ENCODE measurements at regions of chr12 and their contacts with region 1.

Region 1: DNA sequence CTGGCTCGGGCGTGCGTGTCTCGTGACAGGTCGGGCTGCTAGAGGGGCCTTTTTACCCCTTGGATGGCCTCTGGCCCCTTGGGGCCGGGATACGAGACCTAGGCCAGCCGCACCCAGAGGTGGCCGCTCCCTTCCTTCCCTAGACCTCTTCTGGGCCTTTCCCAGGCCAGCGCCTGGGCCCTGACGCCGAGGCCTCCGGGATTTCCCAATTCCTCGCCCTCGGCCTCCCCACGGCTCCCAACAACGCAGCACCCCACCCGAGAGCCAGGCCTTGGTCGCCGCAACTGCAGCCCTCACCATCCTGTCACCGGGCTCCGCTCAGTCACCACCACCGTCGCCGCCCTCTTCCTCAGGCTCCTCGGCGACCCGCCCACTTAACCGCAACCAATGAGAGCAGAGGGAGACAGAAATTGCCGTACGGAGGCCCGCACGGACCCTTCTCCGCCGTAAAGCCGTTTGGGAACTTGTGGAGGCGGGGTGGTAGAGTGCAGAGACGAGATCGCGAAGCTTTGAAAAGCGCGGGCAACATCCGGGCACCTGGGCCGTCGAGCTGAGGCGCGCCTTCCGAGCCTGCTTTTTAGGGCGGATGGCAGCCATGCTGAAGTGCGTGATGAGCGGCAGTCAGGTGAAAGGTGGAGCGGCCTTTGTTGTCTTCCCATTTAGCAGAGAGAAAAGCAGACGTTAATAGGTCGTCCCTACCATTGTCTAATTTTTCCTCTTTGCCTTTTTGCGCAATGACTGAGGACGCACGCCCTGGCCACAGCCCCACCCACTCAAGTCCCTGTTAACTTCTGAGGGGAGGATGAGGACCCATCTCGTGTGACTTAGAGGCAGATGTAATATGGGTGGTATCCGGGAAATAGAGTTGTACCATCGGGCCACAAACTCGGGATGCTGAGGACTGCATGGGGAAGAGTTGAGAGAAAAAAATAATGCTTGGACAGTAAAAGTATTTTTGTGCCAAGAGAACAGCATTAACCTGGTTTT is at the starts of genes RAD9B and VPS29:
- DNase-seq: peak; percentile 98
- ATAC-seq: peak; percentile 98
- H3K4me3 Mint-ChIP-seq: peak within 1 kb of the TSS; percentile 98
- H3K27ac Mint-ChIP-seq: peak within 1 kb of the TSS; percentile 90
- H3K4me1 Mint-ChIP-seq: peaks cover 8% of the 10 kb centered on the region
- H3K27me3 Mint-ChIP-seq: peaks cover 30% of the 10 kb centered on the region
- CTCF ChIP-seq: no peak
- total RNA-seq, gene RAD9B: 0.09 to 0.32 TPM in 2 of 3 replicates, not detected in the other
- total RNA-seq, gene VPS29: 51.2 to 66.3 TPM (median 54.4 TPM) in 3 replicates

Region 2: DNA sequence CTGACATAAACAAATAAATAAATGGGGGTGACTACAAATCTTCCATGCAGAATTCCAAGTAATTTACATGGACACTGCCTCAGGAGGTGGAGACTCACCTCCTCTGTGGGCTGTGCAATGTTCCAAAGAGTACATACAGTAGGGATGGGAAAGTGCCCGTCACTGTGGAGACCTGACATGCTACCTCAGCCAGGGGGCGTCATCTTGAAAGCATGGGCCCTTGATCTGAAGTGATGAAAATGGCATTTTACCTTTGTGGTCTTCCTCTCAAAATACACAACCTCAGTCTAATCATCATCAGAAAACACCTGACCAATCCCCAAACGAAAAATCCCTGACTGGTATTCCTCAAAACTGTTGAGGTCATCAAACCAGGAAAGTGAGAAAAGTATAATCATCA is 147.0 kb before region 1 on chr12:
- CTCF ChIA-PET with region 1: no interaction called
- POLR2A ChIA-PET with region 1: no interaction called
- DNase-seq: peak; percentile 61
- ATAC-seq: peak; percentile 89
- H3K4me3 Mint-ChIP-seq: no peak overlapping the region
- H3K27ac Mint-ChIP-seq: peak overlapping the region; percentile 4; the same call in 1 of the 2 replicates
- H3K4me1 Mint-ChIP-seq: no peaks in the 10 kb centered on the region
- H3K27me3 Mint-ChIP-seq: no peaks in the 10 kb centered on the region
- CTCF ChIP-seq: peak; percentile 30; the same call in 1 of the 2 replicates

Region 3: GRCh38 chr12:110468212-110469048 is 33.6 kb before region 1 on chr12 and contains the starts of genes FAM216A and GPN3:
- CTCF ChIA-PET with region 1: interaction called, 5 read pairs
- POLR2A ChIA-PET with region 1: interaction called, 14 read pairs
- DNase-seq: peak; percentile 97
- ATAC-seq: peak; percentile 87
- H3K4me3 Mint-ChIP-seq: peak within 1 kb of the TSS; percentile 100
- H3K27ac Mint-ChIP-seq: peak within 1 kb of the TSS; percentile 100
- H3K4me1 Mint-ChIP-seq: peaks cover 22% of the 10 kb centered on the region
- H3K27me3 Mint-ChIP-seq: no peaks in the 10 kb centered on the region
- CTCF ChIP-seq: no peak
- total RNA-seq, gene FAM216A: 16.9 to 20.2 TPM (median 19.7 TPM) in 3 replicates
- total RNA-seq, gene GPN3: 46.4 to 53.0 TPM (median 51.2 TPM) in 3 replicates

Region 4: GRCh38 chr12:110888256-110888991 is 386.4 kb after region 1 on chr12:
- CTCF ChIA-PET with region 1: no interaction called
- POLR2A ChIA-PET with region 1: no interaction called
- DNase-seq: no peak
- ATAC-seq: no peak
- H3K4me3 Mint-ChIP-seq: no peak overlapping the region
- H3K27ac Mint-ChIP-seq: no peak overlapping the region
- H3K4me1 Mint-ChIP-seq: peaks cover 2% of the 10 kb centered on the region
- H3K27me3 Mint-ChIP-seq: peaks cover 3% of the 10 kb centered on the region
- CTCF ChIP-seq: no peak

Measured in WTC11 (cell line).